Prostate gland (tissue), 2 donors: ENCODE measurements at regions of chr19 and their contacts with region 1.

Region 1: DNA sequence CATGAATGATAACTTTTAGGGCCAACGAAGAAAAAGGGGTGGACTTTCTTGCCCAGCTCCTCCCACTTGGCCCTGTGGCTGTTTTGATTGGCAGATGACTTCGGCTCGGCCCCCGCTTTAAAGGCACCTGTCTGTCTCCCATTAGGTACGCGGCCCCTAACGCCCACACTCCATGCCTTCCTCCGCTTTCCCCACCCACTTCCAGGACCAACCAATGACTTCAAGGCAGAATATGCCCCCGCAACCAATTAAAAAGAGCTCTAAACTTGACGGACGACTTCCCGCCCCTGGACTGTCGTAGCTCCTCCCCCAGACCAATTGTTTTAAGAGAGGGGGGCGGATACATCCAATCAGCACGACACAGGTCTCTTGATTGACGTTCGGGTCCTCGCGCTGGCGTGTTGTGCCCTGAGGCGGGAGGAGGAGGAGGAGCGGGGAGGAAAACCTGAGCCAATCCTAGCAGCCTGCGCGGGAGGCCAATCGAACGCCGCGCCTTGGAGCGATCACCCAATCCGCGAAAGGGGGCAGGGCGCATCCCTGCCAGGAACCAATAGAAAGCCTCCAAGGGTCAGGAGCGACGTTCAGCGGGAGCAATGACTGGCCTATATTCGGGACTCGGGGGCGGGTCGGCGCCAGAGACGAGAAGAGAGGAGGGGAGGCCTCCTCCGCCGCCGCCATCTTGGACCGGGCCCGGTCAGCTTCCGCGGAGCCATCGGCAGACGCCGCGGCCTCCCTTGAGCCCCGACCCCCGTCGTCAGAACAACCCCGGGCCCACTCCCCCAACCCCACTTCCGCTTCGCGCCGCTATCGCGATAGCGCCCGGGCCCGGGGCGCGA is at the start of gene CNOT3:
- DNase-seq: peak; percentile 99
- H3K4me3 ChIP-seq: peak within 1 kb of the TSS; percentile 94 to 99
- H3K27ac ChIP-seq: peak within 1 kb of the TSS; percentile 92 to 97
- H3K4me1 ChIP-seq: peaks cover 7% of the 10 kb centered on the region
- H3K27me3 ChIP-seq: no peaks in the 10 kb centered on the region
- CTCF ChIP-seq: no peak
- POLR2A ChIP-seq: peak; percentile 94
- total RNA-seq, gene CNOT3: 22.8 to 54.4 TPM

Region 2: GRCh38 chr19:53867225-53868090 is 269.8 kb before region 1 on chr19 and contains the start of gene MYADM:
- intact Hi-C with region 1: loop called (anchors 10 kb)
- DNase-seq: peak; percentile 95
- H3K4me3 ChIP-seq: peak within 1 kb of the TSS; percentile 64 to 80
- H3K27ac ChIP-seq: peak within 1 kb of the TSS; percentile 90 to 93
- H3K4me1 ChIP-seq: no peaks in the 10 kb centered on the region
- H3K27me3 ChIP-seq: no peaks in the 10 kb centered on the region
- CTCF ChIP-seq: no peak
- POLR2A ChIP-seq: peak; percentile 57
- total RNA-seq, gene MYADM: 56.4 to 96.3 TPM

Region 3: GRCh38 chr19:54035215-54036178 is 101.8 kb before region 1 on chr19:
- intact Hi-C with region 1: no loop called
- DNase-seq: no peak
- H3K4me3 ChIP-seq: no peak overlapping the region
- H3K27ac ChIP-seq: no peak overlapping the region
- H3K4me1 ChIP-seq: no peaks in the 10 kb centered on the region
- H3K27me3 ChIP-seq: peaks cover 2% of the 10 kb centered on the region
- CTCF ChIP-seq: no peak
- POLR2A ChIP-seq: no peak